ENCODE measurements at regions of chr16 and their contacts with region 1.

Region 1: DNA sequence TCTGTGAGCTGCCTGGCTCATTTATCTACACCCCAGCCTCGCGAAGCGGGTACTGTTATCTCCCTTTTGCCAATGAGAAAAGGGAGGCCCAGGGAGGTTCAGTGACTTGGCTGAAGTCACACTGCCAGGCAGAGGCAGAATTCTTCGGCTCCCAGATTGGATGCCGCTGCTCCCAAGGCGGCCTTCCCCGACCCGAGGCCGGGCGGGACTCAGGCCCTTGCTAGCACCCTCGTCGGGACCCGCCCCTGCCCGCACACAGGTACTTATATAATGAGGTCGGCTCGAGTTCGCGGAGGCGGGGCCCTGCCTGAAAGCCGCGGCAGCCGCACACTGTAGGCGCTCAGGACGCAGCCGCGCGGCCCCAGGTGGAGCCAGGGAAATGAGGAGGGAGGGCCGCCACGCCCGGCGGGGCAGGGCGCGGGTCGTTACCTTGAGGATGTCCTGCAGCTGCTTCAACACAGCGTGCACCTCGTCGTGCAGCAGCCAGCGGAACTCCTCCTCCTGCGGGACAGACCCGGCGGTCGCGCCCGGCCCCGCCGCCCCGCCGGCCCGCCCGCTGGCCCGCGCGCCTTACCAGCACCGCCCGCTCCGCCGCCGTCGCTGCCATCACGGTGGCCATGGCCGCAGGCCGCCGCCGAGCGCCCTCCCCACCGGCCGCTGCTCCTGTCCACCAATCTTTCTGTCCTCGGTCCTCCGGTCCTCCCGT is at the start of gene ROGDI:
- DNase-seq: peak; percentile 96
- H3K4me3 ChIP-seq: peak within 1 kb of the TSS; percentile 91
- H3K27ac ChIP-seq: peak within 1 kb of the TSS; percentile 97
- H3K4me1 ChIP-seq: peaks cover 15% of the 10 kb centered on the region
- H3K27me3 ChIP-seq: no peaks in the 10 kb centered on the region
- CTCF ChIP-seq: no peak
- total RNA-seq, gene ROGDI: 18.1 to 23.9 TPM

Region 2: GRCh38 chr16:4330277-4330874 is 471.7 kb before region 1 on chr16:
- intact Hi-C with region 1: no loop called
- DNase-seq: peak; percentile 84
- H3K4me3 ChIP-seq: no peak overlapping the region
- H3K27ac ChIP-seq: no peak overlapping the region
- H3K4me1 ChIP-seq: peaks cover 4% of the 10 kb centered on the region
- H3K27me3 ChIP-seq: peaks cover 8% of the 10 kb centered on the region
- CTCF ChIP-seq: peak; percentile 97

Region 3: GRCh38 chr16:4768549-4769305 is 33.4 kb before region 1 on chr16:
- intact Hi-C with region 1: loop called (anchors 2 kb)
- DNase-seq: peak; percentile 99
- H3K4me3 ChIP-seq: peak overlapping the region; percentile 97
- H3K27ac ChIP-seq: peak overlapping the region; percentile 90
- H3K4me1 ChIP-seq: peaks cover 15% of the 10 kb centered on the region
- H3K27me3 ChIP-seq: no peaks in the 10 kb centered on the region
- CTCF ChIP-seq: no peak

Region 4: GRCh38 chr16:4839942-4840341 is 37.8 kb after region 1 on chr16:
- intact Hi-C with region 1: no loop called
- DNase-seq: no peak
- H3K4me3 ChIP-seq: no peak overlapping the region
- H3K27ac ChIP-seq: no peak overlapping the region
- H3K4me1 ChIP-seq: no peaks in the 10 kb centered on the region
- H3K27me3 ChIP-seq: no peaks in the 10 kb centered on the region
- CTCF ChIP-seq: no peak

Region 5: GRCh38 chr16:4915226-4915761 is 113.2 kb after region 1 on chr16:
- intact Hi-C with region 1: no loop called
- DNase-seq: no peak
- H3K4me3 ChIP-seq: no peak overlapping the region
- H3K27ac ChIP-seq: no peak overlapping the region
- H3K4me1 ChIP-seq: no peaks in the 10 kb centered on the region
- H3K27me3 ChIP-seq: no peaks in the 10 kb centered on the region
- CTCF ChIP-seq: no peak

Measured in colonic mucosa (tissue), 4 donors.